T-cell (primary cell): ENCODE measurements at regions of chr1 and their contacts with region 1.

Region 1: DNA sequence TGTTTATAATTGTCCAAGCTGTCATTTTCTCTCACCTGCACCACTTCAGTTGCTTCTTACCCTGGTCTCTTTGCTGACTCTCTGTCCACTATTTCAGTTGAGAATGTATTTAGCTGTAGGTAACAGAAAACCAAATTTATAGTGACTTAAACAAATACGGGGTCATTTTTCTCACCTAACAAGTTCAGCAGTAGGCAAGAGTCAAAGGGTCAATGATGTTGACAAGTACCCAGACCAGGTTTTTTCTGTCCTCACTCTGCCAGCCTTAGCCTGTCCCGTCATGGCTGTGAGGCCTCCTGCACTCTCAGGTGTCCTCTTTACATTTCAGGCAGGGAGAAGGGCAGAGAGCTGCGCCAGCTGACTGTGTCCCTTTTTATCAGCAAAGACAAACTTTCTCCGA is 11.8 kb downstream of the RIIAD1 start:
- DNase-seq: no peak
- ATAC-seq: no peak
- H3K4me3 ChIP-seq: no peak overlapping the region
- H3K4me3 Mint-ChIP-seq: no peak overlapping the region
- H3K27ac ChIP-seq: no peak overlapping the region
- H3K27ac Mint-ChIP-seq: no peak overlapping the region
- H3K4me1 ChIP-seq: no peaks in the 10 kb centered on the region
- H3K4me1 Mint-ChIP-seq: peaks cover 0 to 4% (median 0%) of the 10 kb centered on the region in 3 donors
- H3K27me3 ChIP-seq: peaks cover 0 to 23% of the 10 kb centered on the region in 2 experiments
- H3K27me3 Mint-ChIP-seq: peaks cover 21 to 32% of the 10 kb centered on the region in 2 donors

Region 2: DNA sequence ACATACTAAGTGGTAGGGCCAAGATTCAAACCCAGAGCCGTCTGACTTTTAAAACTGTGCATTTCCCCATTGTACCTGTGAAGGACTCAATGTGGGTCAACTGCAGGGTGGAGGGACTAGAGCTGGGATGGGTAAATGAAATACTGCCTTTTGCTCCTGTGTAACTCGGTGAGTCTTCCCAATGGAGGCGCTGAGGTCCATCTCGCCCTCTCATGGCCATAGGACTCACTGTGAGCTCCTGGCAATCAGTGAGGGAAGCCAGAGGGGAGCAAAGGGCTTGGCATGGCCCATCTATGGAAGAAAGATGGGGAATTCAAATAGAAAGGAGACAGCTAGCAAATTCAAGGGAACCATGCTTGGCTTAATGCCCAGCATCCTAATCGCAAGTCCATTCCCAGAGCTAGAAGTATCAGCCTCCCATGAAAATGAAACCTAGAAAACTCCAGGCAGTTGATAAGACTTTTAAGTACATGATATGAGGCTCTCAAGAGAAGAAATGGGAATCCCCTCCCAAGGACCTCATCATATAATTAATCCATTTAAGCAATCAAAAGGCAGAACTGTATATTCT is 247.4 kb before region 1 on chr1:
- CTCF ChIA-PET with region 1: no interaction called
- POLR2A ChIA-PET with region 1: interaction called in 1 of 2 experiments, 11 read pairs
- DNase-seq: no peak
- ATAC-seq: no peak
- H3K4me3 ChIP-seq: no peak overlapping the region
- H3K4me3 Mint-ChIP-seq: no peak overlapping the region
- H3K27ac ChIP-seq: no peak overlapping the region
- H3K27ac Mint-ChIP-seq: no peak overlapping the region
- H3K4me1 ChIP-seq: no peaks in the 10 kb centered on the region
- H3K4me1 Mint-ChIP-seq: no peaks in the 10 kb centered on the region
- H3K27me3 ChIP-seq: no peaks in the 10 kb centered on the region
- H3K27me3 Mint-ChIP-seq: no peaks in the 10 kb centered on the region